Pancreas (tissue), 10 donors: ENCODE measurements at regions of chr19 and their contacts with region 1.

Region 1: DNA sequence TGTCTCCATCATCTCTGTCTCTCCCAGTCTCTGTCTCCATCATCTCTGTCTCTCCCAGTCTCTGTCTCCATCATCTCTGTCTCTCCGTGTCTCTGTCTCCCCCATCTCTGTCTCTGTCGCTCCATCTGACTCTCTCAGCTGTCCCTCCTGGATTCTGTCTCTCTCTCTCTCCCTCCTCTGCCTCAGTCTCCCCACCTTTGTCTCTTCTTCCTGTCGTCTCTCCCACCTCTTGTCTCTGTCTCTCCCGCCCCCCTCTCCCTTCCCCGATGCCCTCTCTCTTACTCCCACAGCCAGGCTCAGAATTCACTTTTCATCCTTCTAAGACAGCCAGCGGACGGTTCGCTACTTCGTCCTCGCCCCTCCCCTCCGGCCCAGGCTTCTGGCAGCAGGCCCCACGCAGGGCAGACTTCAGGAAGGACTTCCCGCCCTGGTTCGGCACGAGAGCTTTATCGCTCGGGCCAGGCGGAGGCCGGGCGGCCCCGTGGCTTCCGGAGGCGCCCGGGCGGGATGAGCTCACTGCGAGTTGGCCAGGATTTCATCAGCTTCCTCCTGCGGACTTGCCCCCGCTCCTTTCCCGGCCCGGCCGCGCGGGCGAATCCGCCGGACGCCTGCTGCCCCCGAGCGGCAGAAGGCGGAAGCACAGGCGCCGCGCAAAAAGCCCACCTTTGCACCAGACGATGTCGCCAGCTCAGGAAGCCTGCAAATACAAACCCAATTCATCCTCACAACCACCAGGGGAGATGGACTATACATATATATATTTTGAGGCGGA is 12.4 kb upstream of the CCDC9 start:
- DNase-seq: peak; percentile 80 to 94 (median 92)
- ATAC-seq: peak; percentile 74 to 88 (median 82)
- H3K4me3 ChIP-seq: peak overlapping the region in 2 of 4 donors; percentile 6 to 17
- H3K27ac ChIP-seq: peak overlapping the region in 1 of 4 donors; percentile 41
- H3K4me1 ChIP-seq: peaks cover 5 to 11% (median 8%) of the 10 kb centered on the region in 3 donors
- H3K27me3 ChIP-seq: no peaks in the 10 kb centered on the region
- CTCF ChIP-seq: peak; percentile 97 to 98 (median 97)

Region 2: GRCh38 chr19:47145639-47146486 is 98.1 kb before region 1 on chr19:
- intact Hi-C with region 1: loop called in 2 of 3 experiments (anchors 5 to 10 kb)
- DNase-seq: no peak
- ATAC-seq: no peak
- H3K4me3 ChIP-seq: no peak overlapping the region
- H3K27ac ChIP-seq: no peak overlapping the region
- H3K4me1 ChIP-seq: no peaks in the 10 kb centered on the region
- H3K27me3 ChIP-seq: no peaks in the 10 kb centered on the region
- CTCF ChIP-seq: no peak

Region 3: DNA sequence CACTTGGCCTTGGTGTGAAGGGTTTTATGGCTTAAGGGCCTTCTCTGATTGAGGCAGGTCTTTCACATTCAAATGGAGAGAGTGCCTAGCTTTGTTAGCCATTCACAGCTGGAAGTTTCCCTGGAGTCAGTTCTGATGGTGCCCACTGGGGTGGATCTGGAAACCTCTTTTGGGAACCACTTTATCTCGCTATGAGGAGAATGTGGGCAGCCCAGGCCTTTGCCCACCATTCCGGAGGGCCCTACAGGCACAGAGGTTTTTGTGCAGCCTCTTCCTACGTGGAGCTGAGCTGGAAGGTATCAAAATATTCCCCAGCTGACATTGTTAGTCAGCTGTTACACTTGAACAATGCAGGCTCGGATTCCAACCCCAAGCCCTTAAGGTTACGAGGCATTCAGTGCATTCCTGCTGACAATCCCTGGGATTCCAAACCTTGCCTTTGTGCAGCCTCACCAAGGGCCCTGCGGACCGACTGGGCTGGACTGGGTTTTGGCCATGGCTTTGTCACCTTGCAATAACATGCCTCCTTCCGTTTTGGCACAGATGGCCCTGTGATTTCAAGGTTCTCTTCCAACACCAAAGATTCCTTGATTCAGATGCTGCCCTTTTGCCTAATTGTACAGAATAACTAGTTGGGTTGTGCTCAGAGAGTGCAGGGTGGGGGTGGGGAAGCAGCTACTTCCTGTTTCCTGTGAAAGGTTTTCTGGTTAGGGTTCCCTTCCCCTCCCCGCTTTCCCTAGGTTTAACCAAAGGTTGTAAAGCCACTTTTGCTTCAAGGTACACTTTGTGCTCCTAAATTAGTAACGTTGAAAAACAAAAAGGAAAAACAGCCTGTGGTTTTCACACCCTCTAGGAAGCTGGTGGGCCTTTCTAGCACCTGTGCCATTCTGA is 86.3 kb before region 1 on chr19:
- intact Hi-C with region 1: loop called in 1 of 3 experiments (anchors 10 kb)
- DNase-seq: no peak
- ATAC-seq: peak in 3 of 4 donors; percentile 42 to 53 (median 52)
- H3K4me3 ChIP-seq: no peak overlapping the region
- H3K27ac ChIP-seq: peak overlapping the region in 2 of 4 donors; percentile 15 to 16
- H3K4me1 ChIP-seq: peaks cover 4 to 5% (median 4%) of the 10 kb centered on the region in 3 donors
- H3K27me3 ChIP-seq: no peaks in the 10 kb centered on the region
- CTCF ChIP-seq: no peak

Region 4: GRCh38 chr19:47209319-47210179 is 34.4 kb before region 1 on chr19:
- intact Hi-C with region 1: loop called in 2 of 3 experiments (anchors 5 kb)
- DNase-seq: no peak
- ATAC-seq: no peak
- H3K4me3 ChIP-seq: no peak overlapping the region
- H3K27ac ChIP-seq: no peak overlapping the region
- H3K4me1 ChIP-seq: no peaks in the 10 kb centered on the region
- H3K27me3 ChIP-seq: no peaks in the 10 kb centered on the region
- CTCF ChIP-seq: no peak

Region 5: GRCh38 chr19:47225746-47226425 is 18.1 kb before region 1 on chr19:
- intact Hi-C with region 1: no loop called
- DNase-seq: peak; percentile 83 to 98 (median 92)
- ATAC-seq: peak; percentile 73 to 82 (median 78)
- H3K4me3 ChIP-seq: peak overlapping the region; percentile 31 to 99 (median 73)
- H3K27ac ChIP-seq: peak overlapping the region; percentile 93 to 97 (median 96)
- H3K4me1 ChIP-seq: peaks cover 0 to 18% (median 5%) of the 10 kb centered on the region in 3 donors
- H3K27me3 ChIP-seq: no peaks in the 10 kb centered on the region
- CTCF ChIP-seq: peak in 3 of 4 donors; percentile 17 to 29 (median 20)

Region 6: GRCh38 chr19:47284324-47284899 is 40.5 kb after region 1 on chr19:
- intact Hi-C with region 1: no loop called
- DNase-seq: peak in 2 of 6 donors; percentile 38 to 51
- ATAC-seq: peak; percentile 60 to 74 (median 66)
- H3K4me3 ChIP-seq: no peak overlapping the region
- H3K27ac ChIP-seq: no peak overlapping the region
- H3K4me1 ChIP-seq: no peaks in the 10 kb centered on the region
- H3K27me3 ChIP-seq: no peaks in the 10 kb centered on the region
- CTCF ChIP-seq: peak; percentile 80 to 82 (median 81)